ENCODE measurements at regions of chr18 and their contacts with region 1.

Region 1: GRCh38 chr18:45879681-45880655 is 54.5 kb downstream of the SIGLEC15 start:
- DNase-seq: peak; percentile 35 to 91
- H3K4me3 ChIP-seq: no peak overlapping the region
- CTCF ChIP-seq: peak in 1 of 3 donors; percentile 58
- POLR2A ChIP-seq: no peak

Region 2: GRCh38 chr18:45686891-45687611 is 192.9 kb before region 1 on chr18:
- intact Hi-C with region 1: loop called (anchors 10 kb)
- DNase-seq: no peak
- H3K4me3 ChIP-seq: no peak overlapping the region
- CTCF ChIP-seq: no peak
- POLR2A ChIP-seq: no peak

Region 3: DNA sequence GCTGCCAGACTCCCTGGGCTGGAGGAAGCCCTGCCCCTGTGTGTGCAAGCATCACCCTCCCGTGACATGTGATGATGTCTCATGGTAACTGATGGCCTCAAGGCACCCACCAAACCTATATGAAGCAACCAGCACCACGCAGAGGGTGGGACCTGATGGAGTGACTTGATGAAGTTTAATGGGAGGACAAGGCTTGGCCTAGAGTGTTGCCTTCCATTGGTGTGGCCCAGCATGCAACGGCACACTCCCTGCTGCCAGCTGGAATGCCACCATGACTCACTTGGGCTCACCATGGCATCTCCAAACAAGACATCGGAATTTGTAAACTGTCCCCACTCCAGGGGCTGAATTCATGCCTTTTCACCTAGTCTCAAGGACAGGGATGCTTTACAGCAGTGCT is 164.6 kb before region 1 on chr18:
- intact Hi-C with region 1: loop called (anchors 10 kb)
- DNase-seq: no peak
- H3K4me3 ChIP-seq: no peak overlapping the region
- CTCF ChIP-seq: no peak
- POLR2A ChIP-seq: no peak